T-cell (primary cell): ENCODE measurements at regions of chr11 and their contacts with region 1.

Region 1: DNA sequence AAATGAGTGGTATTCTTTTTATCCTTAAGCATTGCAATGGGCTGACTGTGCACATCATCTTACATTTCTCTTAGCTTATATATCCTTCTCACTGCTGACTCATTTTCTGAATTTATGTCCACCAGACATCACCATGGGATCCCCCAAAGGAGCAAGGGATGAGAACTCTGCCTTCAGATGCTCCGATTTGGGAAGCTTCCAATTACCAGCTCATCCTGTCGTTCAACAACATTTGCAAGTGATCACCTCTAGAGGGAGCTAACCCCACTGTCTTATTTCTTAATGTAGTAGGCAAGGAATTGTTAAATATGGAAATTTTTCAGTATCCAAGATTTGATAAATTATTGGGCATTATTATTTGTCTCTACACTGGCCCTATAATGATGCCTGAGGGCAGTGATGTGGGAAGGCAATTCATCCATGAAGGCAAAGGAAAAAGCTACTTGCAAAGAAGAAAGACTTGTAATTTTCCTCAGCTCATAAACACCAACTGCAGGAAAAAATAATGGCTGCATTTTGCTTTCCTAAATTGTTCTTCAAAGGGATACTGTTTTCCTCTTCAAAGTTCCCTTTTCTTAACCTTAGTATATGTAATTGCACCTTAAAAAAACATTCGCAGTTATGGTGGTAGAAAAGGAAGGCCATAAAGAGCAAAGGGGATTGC is 102.4 kb upstream of the FSHB start:
- DNase-seq: peak in 1 of 35 experiments; percentile 3
- ATAC-seq: no peak
- H3K4me3 ChIP-seq: no peak overlapping the region
- H3K4me3 Mint-ChIP-seq: no peak overlapping the region
- H3K27ac ChIP-seq: no peak overlapping the region
- H3K27ac Mint-ChIP-seq: no peak overlapping the region
- H3K4me1 ChIP-seq: no peaks in the 10 kb centered on the region
- H3K4me1 Mint-ChIP-seq: no peaks in the 10 kb centered on the region
- H3K27me3 ChIP-seq: no peaks in the 10 kb centered on the region
- H3K27me3 Mint-ChIP-seq: peaks cover 0 to 3% of the 10 kb centered on the region in 2 donors

Region 2: GRCh38 chr11:30041171-30041570 is 87.2 kb before region 1 on chr11:
- CTCF ChIA-PET with region 1: no interaction called
- POLR2A ChIA-PET with region 1: no interaction called
- DNase-seq: no peak
- ATAC-seq: no peak
- H3K4me3 ChIP-seq: no peak overlapping the region
- H3K4me3 Mint-ChIP-seq: no peak overlapping the region
- H3K27ac ChIP-seq: no peak overlapping the region
- H3K27ac Mint-ChIP-seq: no peak overlapping the region
- H3K4me1 ChIP-seq: no peaks in the 10 kb centered on the region
- H3K4me1 Mint-ChIP-seq: no peaks in the 10 kb centered on the region
- H3K27me3 ChIP-seq: no peaks in the 10 kb centered on the region
- H3K27me3 Mint-ChIP-seq: peaks cover 2 to 3% of the 10 kb centered on the region in 2 donors

Region 3: DNA sequence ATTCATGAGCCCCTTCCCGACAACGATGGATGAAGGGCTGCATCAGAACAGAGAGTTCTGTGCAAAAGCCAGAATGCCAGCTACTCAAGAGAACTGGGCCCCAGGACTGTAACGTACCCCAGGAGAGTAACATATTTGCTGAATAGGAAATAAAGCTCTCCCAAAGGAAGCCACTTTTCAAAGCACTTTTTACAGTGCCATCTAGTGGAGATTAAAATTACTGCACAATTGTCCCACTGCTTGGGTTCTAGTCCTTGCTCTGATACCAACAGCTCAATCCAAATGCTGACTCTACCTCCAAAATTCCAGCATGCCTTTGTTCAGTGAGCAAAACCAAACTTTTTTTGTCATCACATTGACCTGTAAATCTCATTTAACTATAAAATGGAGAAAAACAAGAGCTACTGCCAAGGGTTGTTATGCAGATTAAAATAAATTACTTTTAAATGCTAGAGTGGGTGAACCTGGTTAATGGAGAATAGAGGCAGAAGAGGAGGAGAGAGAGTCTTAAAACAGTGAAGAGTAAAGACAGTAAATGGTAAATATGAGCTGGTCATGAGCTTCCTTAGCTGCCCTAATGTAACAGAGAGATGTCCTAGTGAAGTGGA is 14.8 kb after region 1 on chr11:
- CTCF ChIA-PET with region 1: interaction called, 11 to 24 read pairs
- POLR2A ChIA-PET with region 1: no interaction called
- DNase-seq: peak in 2 of 35 experiments; percentile 0 to 24
- ATAC-seq: no peak
- H3K4me3 ChIP-seq: no peak overlapping the region
- H3K4me3 Mint-ChIP-seq: no peak overlapping the region
- H3K27ac ChIP-seq: no peak overlapping the region
- H3K27ac Mint-ChIP-seq: no peak overlapping the region
- H3K4me1 ChIP-seq: no peaks in the 10 kb centered on the region
- H3K4me1 Mint-ChIP-seq: no peaks in the 10 kb centered on the region
- H3K27me3 ChIP-seq: no peaks in the 10 kb centered on the region
- H3K27me3 Mint-ChIP-seq: peaks cover 4 to 16% of the 10 kb centered on the region in 2 donors

Region 4: GRCh38 chr11:30285416-30286121 is 157.2 kb after region 1 on chr11:
- CTCF ChIA-PET with region 1: no interaction called
- POLR2A ChIA-PET with region 1: no interaction called
- DNase-seq: no peak
- ATAC-seq: no peak
- H3K4me3 ChIP-seq: no peak overlapping the region
- H3K4me3 Mint-ChIP-seq: no peak overlapping the region
- H3K27ac ChIP-seq: no peak overlapping the region
- H3K27ac Mint-ChIP-seq: no peak overlapping the region
- H3K4me1 ChIP-seq: peaks cover 11 to 14% of the 10 kb centered on the region in 2 experiments
- H3K4me1 Mint-ChIP-seq: peaks cover 21 to 27% (median 24%) of the 10 kb centered on the region in 3 donors
- H3K27me3 ChIP-seq: no peaks in the 10 kb centered on the region
- H3K27me3 Mint-ChIP-seq: peaks cover 1 to 3% of the 10 kb centered on the region in 2 donors